Panc1 (cell line): ENCODE measurements at regions of chr17 and their contacts with region 1.

Region 1: DNA sequence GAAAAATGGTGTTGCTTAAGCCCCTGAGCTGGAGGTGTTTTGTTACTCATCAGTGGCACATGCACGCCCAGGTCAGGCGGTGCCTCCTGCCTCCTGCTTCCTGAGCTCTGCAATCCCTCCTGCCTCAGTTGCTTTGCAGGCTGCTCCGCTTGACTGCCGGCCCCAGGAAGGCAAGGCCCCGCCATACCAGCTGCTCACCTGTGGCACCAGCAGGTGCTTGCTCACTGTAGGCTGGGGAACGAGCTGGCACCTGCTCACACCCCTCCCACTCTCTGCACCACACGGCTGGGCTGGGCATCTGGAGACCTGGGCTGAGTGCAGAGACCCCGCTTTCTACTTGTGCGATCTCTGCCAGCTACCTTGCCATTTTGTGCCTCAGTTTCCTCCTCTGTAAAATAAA is 200.2 kb downstream of the RBFOX3 start:
- DNase-seq: no peak
- ATAC-seq: no peak
- H3K4me3 ChIP-seq: no peak overlapping the region
- H3K27ac ChIP-seq: no peak overlapping the region
- H3K4me1 ChIP-seq: peaks cover 5% of the 10 kb centered on the region; the same call in 1 of the 2 replicates
- H3K27me3 ChIP-seq: peaks cover 33% of the 10 kb centered on the region
- CTCF ChIP-seq: no peak

Region 2: GRCh38 chr17:79179334-79179733 is 231.3 kb before region 1 on chr17:
- CTCF ChIA-PET with region 1: no interaction called
- POLR2A ChIA-PET with region 1: interaction called, 11 read pairs
- in situ Hi-C with region 1: no loop called
- intact Hi-C with region 1: no loop called
- DNase-seq: no peak
- ATAC-seq: no peak
- H3K4me3 ChIP-seq: no peak overlapping the region
- H3K27ac ChIP-seq: no peak overlapping the region
- H3K4me1 ChIP-seq: peaks cover 3% of the 10 kb centered on the region; the same call in 1 of the 2 replicates
- H3K27me3 ChIP-seq: peaks cover 22% of the 10 kb centered on the region
- CTCF ChIP-seq: no peak

Region 3: DNA sequence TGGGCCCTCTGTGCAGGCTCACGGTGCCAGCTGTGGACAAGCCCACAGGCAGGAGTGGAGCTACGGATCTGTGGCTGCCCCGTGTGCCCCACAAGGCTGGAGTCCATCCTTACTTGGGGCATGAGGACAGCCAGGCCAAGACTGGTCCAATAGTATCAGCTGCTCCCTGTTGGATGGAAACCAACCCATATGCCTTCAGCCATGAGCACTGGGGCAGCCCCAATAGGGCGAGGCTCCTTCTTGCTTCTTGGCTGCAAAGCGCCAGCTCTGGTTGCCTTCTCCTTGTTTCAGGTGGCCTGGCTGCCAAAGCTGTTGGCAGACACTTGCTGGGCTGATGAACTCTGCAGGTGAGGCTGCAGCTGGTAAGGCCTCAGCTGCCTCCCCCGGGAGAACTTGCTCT is 148.1 kb before region 1 on chr17:
- CTCF ChIA-PET with region 1: no interaction called
- POLR2A ChIA-PET with region 1: no interaction called
- in situ Hi-C with region 1: no loop called
- intact Hi-C with region 1: no loop called
- DNase-seq: no peak
- ATAC-seq: no peak
- H3K4me3 ChIP-seq: no peak overlapping the region
- H3K27ac ChIP-seq: no peak overlapping the region
- H3K4me1 ChIP-seq: no peaks in the 10 kb centered on the region
- H3K27me3 ChIP-seq: peaks cover 19% of the 10 kb centered on the region
- CTCF ChIP-seq: no peak